K562 (cell line): ENCODE measurements at regions of chr22 and their contacts with region 1.

Region 1: DNA sequence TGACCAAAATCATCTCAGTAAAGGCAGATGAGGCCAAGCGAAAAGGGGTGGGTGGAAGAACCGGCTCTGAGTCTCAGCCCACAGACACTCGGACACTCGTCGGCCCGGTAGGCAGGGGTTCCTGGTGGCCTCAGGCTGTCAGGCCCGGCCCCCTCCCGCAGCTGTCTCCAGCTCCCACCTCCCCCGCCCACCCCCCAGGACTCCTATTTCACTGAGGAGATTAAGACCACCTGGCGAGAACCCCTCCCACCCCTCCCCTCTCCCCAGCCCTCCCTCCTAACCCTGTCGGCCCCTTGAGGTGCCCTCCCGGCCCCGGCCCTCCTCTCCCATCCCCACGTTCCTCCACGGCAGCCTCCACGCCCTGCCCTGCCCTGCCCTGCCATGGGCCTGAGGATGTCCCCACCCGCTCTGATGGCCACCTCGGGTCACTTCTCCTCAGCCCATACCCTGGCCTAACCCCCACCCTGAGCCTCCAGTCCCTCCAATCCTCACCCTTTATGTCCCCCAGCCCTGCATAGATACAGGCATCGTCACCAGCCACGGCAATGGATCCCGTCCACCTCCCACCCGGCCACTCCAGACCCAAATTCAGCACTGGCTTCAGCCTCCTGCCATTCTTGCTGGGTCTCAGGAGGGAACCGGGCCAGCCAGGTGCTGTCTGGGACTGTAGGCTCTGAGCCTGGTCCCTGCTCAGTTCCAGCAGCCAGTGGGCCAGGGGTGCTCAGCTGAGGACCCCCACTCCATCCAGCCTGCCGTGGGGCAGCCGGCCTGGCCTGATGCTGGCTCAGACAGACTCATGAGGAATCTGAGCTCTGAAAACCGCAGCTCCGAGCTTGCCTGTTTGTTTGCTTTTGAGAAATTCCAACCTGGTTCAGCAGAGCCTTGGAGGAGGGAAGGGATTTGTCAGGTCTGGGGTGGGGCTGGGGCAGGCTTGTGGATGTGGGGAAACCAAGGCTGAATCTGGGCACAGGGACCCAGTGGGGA is 9.8 kb upstream of the TBX1 start:
- DNase-seq: no peak
- ATAC-seq: no peak
- H3K4me3 ChIP-seq: no peak overlapping the region
- H3K27ac ChIP-seq: no peak overlapping the region
- H3K4me1 ChIP-seq: peaks cover 5 to 70% of the 10 kb centered on the region in 2 experiments
- H3K27me3 ChIP-seq: peaks cover 56 to 82% of the 10 kb centered on the region in 2 experiments; a peak in 4 of 5 replicates
- CTCF ChIP-seq: no peak
- EP300 ChIP-seq: no peak
- POLR2A ChIP-seq: no peak
- RAD21 ChIP-seq: no peak

Region 2: GRCh38 chr22:19766511-19767426 is 16.0 kb after region 1 on chr22:
- CTCF ChIA-PET with region 1: interaction called, 9 read pairs
- POLR2A ChIA-PET with region 1: interaction called, 37 read pairs
- in situ Hi-C with region 1: no loop called
- intact Hi-C with region 1: no loop called
- DNase-seq: peak; percentile 82 to 86 (median 84)
- ATAC-seq: peak; percentile 70
- H3K4me3 ChIP-seq: peak overlapping the region; percentile 34
- H3K27ac ChIP-seq: peak overlapping the region; percentile 46; the same call in 1 of the 3 replicates
- H3K4me1 ChIP-seq: peaks cover 6 to 89% of the 10 kb centered on the region in 2 experiments; a peak in 3 of 5 replicates
- H3K27me3 ChIP-seq: peaks cover 0 to 14% of the 10 kb centered on the region in 2 experiments; a peak in 2 of 5 replicates
- CTCF ChIP-seq: peak; percentile 71 to 79 (median 75)
- EP300 ChIP-seq: 0 out of 2 replicates have a peak, but pooled peaks have one; percentile 16
- POLR2A ChIP-seq: 0 out of 2 replicates have a peak, but pooled peaks have one; percentile 36
- RAD21 ChIP-seq: peak in 1 of 2 experiments; percentile 71; a peak in 2 of 4 replicates